ENCODE measurements at regions of chr3 and their contacts with region 1.

Region 1: DNA sequence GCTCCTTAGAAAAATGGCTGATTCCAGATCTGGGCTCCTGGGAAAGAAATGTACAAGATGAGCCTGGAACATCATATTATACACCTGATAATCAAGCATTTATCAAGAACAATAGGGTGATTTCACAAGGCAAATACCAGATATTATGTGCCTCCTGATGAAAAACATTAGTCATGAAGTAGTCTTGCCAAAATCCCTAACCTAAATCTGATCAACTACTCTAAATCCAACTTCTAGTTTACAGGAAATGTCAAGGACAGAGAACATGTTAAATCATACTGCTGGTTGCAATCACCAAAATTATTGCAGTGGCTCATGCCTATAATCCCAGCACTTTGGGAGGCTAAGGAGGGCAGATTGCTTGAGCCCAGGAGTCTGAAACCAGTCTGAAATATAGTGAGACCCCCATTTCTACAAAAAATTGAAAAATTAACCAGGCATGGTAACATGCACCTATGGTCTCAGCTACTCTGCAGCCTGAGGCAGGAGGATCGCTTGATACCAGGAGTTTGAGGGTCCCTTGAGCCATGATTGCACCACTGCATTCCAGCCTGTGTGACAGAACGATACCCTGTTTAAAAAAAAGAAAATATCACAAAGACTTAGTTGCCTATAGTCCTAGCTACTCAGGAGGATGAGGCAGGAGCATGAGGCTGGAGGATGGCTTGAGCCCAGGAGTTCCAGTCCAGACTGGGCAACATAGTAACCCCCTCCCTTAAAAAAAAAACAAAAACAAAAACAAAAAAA is 34.9 kb upstream of the ATP13A3 start:
- DNase-seq: no peak
- H3K4me3 Mint-ChIP-seq: no peak overlapping the region
- H3K27ac Mint-ChIP-seq: no peak overlapping the region
- H3K4me1 Mint-ChIP-seq: peaks cover 25% of the 10 kb centered on the region
- H3K27me3 Mint-ChIP-seq: peaks cover 14% of the 10 kb centered on the region

Region 2: DNA sequence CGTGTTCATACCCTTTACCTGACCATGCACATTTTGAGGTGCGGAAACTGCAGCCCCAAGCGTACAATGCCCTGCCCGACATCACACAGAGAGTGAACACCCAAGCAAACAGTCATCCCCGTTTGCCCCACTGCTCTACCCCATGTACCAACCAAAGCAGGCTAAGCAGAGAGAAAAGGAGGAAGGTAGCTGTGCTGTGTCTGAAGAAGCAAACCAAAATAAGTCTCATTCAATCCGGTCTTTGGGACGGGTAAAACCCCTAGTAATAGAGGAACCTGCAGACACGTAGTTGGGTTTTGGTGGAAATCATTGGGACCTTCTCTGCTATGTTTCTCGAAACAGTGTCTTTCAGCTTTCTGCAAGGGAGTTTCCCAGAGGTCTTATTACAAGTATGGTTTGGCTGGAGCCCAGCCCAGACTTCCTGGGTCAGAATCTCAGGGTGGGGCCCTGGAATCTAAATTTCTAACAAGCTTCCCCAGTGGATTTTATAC is 550.4 kb before region 1 on chr3:
- intact Hi-C with region 1: no loop called
- DNase-seq: peak; percentile 58
- H3K4me3 Mint-ChIP-seq: peak overlapping the region; percentile 4
- H3K27ac Mint-ChIP-seq: peak overlapping the region; percentile 57
- H3K4me1 Mint-ChIP-seq: peaks cover 16% of the 10 kb centered on the region
- H3K27me3 Mint-ChIP-seq: peaks cover 71% of the 10 kb centered on the region

Region 3: GRCh38 chr3:194395778-194396547 is 125.7 kb before region 1 on chr3:
- intact Hi-C with region 1: loop called (anchors 5 kb)
- DNase-seq: peak; percentile 92
- H3K4me3 Mint-ChIP-seq: peak overlapping the region; percentile 82
- H3K27ac Mint-ChIP-seq: peak overlapping the region; percentile 78
- H3K4me1 Mint-ChIP-seq: peaks cover 47% of the 10 kb centered on the region
- H3K27me3 Mint-ChIP-seq: peaks cover 23% of the 10 kb centered on the region

Region 4: GRCh38 chr3:194508491-194509453 is 12.9 kb before region 1 on chr3:
- intact Hi-C with region 1: no loop called
- DNase-seq: no peak
- H3K4me3 Mint-ChIP-seq: no peak overlapping the region
- H3K27ac Mint-ChIP-seq: no peak overlapping the region
- H3K4me1 Mint-ChIP-seq: no peaks in the 10 kb centered on the region
- H3K27me3 Mint-ChIP-seq: no peaks in the 10 kb centered on the region

Region 5: DNA sequence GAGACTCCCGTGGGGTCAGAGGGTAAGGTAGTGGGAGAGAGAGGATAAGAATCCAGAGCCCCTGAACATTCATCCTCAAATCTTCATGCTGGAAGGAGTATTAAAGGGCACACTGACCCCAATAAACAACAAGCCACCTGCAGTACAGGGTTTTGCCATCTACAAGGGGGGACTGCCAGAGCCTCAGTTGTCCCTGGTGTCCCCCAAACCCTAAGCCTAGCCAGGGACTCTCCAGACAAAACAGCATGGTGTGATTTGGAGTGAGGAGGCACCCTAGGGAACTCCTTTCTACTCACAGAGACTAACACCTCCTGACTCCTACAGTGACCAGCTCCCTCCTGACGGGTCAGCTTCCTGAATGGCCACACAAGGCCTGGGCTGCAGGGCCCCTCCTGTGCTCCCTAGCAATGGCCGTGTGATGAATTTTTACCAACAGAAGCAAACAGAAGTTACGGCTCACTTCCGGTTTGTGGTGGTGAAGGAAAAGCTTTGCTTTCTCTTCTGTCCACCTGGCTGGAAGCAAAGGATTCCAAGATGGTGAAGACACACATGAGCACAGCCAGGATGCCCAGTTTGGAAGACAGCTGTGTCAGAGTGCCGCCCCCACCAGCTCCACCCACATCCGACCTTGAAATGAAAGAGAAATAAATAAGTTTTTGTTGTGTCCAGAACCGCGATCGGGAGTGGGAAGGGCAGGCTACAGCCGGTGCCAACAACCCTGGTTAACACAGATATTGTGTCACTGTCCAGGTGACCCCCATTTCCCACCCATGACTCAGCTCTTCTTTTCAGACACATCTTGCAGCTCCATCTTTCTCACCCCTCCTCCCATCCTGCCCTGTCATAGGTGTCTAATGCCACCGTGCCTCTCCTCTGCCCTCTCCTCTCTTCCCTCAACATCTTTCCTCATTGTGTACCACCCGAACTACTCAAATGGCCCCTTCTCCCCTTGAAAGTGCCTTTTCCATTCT is 34.7 kb after region 1 on chr3:
- intact Hi-C with region 1: loop called (anchors 5 kb)
- DNase-seq: peak; percentile 68
- H3K4me3 Mint-ChIP-seq: peak overlapping the region; percentile 49
- H3K27ac Mint-ChIP-seq: peak overlapping the region; percentile 52
- H3K4me1 Mint-ChIP-seq: peaks cover 8% of the 10 kb centered on the region
- H3K27me3 Mint-ChIP-seq: peaks cover 6% of the 10 kb centered on the region

Region 6: GRCh38 chr3:194583604-194584318 is 62.1 kb after region 1 on chr3:
- intact Hi-C with region 1: loop called (anchors 2 kb)
- DNase-seq: peak; percentile 99
- H3K4me3 Mint-ChIP-seq: peak overlapping the region; percentile 98
- H3K27ac Mint-ChIP-seq: peak overlapping the region; percentile 98
- H3K4me1 Mint-ChIP-seq: peaks cover 28% of the 10 kb centered on the region
- H3K27me3 Mint-ChIP-seq: peaks cover 1% of the 10 kb centered on the region

Measured in activated CD4-positive, alpha-beta T cell treated with anti-CD3 and anti-CD28 coated beads, Interleukin-2, amount 10 ng/mL, durations not matched to agents 24 days and 14 days (primary cell).